Ovary (tissue), 10 donors: ENCODE measurements at regions of chr13 and their contacts with region 1.

Region 1: DNA sequence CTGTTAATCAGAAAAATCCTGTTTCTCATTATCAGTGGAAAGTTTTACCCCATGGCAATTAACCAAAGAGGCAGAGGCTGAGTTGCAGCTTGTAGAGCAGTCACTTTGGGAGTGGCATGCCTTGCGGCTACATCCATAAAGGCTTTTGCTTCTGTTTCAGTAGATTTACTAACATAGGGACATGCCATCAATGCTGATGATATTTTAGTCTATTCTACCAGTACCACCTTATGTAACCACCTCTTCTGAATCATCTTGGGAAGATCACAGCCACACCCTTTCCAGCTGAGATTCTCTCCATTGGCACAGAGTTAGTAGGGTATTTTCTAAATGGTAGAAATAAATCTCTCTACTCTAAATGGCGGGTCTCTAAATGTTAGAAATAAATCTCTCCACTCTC is 37.5 kb downstream of the POSTN start:
- DNase-seq: no peak
- H3K4me3 ChIP-seq: no peak overlapping the region
- H3K27ac ChIP-seq: no peak overlapping the region
- H3K4me1 ChIP-seq: no peaks in the 10 kb centered on the region
- H3K27me3 ChIP-seq: no peaks in the 10 kb centered on the region
- CTCF ChIP-seq: no peak
- EP300 ChIP-seq: no peak
- POLR2A ChIP-seq: no peak

Region 2: GRCh38 chr13:37338726-37339385 is 222.2 kb before region 1 on chr13:
- intact Hi-C with region 1: loop called in 1 of 4 experiments (anchors 5 kb)
- DNase-seq: no peak
- H3K4me3 ChIP-seq: no peak overlapping the region
- H3K27ac ChIP-seq: no peak overlapping the region
- H3K4me1 ChIP-seq: no peaks in the 10 kb centered on the region
- H3K27me3 ChIP-seq: no peaks in the 10 kb centered on the region
- CTCF ChIP-seq: no peak
- EP300 ChIP-seq: no peak
- POLR2A ChIP-seq: no peak